ENCODE measurements at regions of chr12 and their contacts with region 1.

Region 1: DNA sequence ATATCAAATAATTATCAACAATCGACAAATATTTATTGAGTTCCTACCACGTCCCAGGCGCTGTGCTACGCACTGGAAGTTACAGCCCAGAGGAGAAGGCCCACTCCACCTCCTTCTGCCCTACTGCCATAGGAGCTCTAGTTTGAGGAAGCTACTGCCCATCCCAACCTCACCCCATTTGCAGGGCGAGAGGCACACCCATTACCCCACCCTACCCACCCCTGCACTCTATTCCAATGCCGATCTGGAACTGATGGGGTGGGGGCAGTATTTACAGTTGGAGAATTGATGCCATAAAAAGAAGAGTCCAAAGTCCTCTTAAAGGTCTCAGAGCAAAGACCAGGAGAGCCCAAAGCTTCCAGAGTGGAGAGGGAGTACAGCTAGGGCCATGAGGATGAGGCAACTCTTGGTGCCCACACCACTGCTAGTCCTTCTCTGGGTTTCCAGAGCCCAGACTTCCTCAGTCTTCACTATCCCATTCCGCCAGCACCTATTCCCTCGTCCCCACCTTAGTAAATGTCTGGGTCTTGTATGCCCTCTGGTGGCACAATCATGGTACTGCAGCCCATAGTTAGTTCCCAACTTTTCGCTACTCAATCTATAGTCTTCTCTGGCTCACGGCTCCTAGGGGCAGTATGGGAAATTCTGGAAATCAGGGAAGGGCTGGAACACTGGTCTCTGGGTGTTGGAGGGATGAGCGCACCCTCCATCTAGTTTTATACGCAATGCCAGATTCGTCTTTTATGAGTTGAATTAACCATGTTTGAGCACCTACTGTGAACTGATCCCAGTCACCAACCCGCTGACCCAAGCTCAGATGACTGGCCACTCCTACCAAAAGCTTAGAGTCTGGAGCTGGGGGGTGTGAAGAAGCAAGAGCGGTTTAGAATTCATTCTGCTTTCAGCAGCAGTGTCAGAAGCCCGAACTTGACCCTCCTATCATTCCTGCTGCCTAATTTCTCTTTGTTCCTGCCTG is 6.9 kb upstream of the ADCY6 start:
- DNase-seq: peak; percentile 60
- H3K4me3 Mint-ChIP-seq: no peak overlapping the region
- H3K27ac Mint-ChIP-seq: no peak overlapping the region
- H3K4me1 Mint-ChIP-seq: peaks cover 5% of the 10 kb centered on the region
- H3K27me3 Mint-ChIP-seq: peaks cover 9% of the 10 kb centered on the region

Region 2: DNA sequence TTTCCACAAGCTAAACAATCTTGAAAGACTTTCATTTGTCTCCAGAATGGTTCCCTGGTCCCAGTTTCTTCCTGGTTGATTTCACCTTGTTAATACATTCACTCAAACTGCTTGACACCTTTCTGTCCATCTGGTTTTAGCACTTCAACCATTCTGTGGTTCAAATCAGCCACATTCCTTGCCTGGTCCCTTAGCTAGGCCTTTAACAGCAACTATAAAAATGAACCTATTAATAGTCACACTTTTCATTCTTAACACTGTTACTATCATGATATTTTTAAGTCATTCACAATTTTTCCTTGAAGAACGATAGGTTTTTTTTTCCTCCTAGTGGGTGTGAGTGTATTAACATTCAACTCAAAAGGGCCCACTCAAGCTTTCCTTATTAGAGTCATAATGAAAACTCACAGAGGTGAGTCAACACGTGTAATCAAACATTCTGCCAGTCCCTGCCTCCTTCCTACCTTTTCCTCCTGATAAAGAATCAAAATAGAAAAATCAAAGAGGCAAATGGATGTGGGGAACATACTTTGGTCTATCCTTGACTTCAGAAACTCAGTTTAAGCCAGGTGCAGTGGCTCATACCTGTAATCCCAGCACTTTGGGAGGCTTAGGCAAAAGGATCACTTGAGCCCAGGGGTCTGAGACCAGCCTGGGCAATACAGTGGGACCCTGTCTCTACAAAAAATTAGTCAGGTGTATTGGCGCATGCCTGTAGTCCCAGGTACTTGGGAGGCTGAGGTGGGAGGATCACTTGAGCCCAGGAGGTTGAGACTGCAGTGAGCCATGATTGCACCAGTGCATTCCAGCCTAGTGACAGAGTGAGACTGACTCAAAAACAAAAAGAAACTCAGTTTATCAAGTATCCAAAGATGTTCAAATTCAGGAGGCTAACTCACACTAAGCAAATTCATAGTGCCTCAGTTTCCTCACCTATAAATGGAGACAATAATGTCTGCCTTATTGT is 44.7 kb before region 1 on chr12:
- CTCF ChIA-PET with region 1: interaction called, 41 read pairs
- POLR2A ChIA-PET with region 1: interaction called, 10 read pairs
- DNase-seq: no peak
- H3K4me3 Mint-ChIP-seq: no peak overlapping the region
- H3K27ac Mint-ChIP-seq: no peak overlapping the region
- H3K4me1 Mint-ChIP-seq: no peaks in the 10 kb centered on the region
- H3K27me3 Mint-ChIP-seq: peaks cover 6% of the 10 kb centered on the region

Region 3: DNA sequence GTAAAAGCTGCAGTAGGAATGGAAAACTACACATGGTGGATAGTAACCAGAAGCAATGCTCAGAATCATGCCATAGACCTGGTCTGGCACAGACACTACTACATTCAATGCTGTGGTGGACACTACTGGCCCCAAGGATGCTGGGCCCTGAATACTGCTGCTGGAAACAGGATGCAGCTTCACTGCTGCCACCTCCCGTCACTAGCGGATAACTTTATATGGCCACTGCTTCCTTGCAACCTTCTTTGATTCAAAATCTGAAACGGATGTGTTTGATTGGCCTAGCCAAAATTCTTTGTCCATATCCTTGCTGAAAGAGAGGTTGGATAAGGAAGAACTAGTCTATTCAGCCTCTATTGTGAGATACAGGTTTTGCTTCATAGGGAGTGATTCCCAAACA is 37.5 kb before region 1 on chr12:
- CTCF ChIA-PET with region 1: interaction called, 41 read pairs
- POLR2A ChIA-PET with region 1: interaction called, 10 read pairs
- DNase-seq: no peak
- H3K4me3 Mint-ChIP-seq: no peak overlapping the region
- H3K27ac Mint-ChIP-seq: no peak overlapping the region
- H3K4me1 Mint-ChIP-seq: peaks cover 2% of the 10 kb centered on the region
- H3K27me3 Mint-ChIP-seq: peaks cover 4% of the 10 kb centered on the region

Region 4: GRCh38 chr12:48814262-48815125 is 18.7 kb after region 1 on chr12:
- CTCF ChIA-PET with region 1: interaction called, 28 read pairs
- POLR2A ChIA-PET with region 1: no interaction called
- DNase-seq: peak; percentile 70
- H3K4me3 Mint-ChIP-seq: peak overlapping the region; percentile 84
- H3K27ac Mint-ChIP-seq: peak overlapping the region; percentile 85
- H3K4me1 Mint-ChIP-seq: peaks cover 37% of the 10 kb centered on the region
- H3K27me3 Mint-ChIP-seq: peaks cover 17% of the 10 kb centered on the region

Region 5: DNA sequence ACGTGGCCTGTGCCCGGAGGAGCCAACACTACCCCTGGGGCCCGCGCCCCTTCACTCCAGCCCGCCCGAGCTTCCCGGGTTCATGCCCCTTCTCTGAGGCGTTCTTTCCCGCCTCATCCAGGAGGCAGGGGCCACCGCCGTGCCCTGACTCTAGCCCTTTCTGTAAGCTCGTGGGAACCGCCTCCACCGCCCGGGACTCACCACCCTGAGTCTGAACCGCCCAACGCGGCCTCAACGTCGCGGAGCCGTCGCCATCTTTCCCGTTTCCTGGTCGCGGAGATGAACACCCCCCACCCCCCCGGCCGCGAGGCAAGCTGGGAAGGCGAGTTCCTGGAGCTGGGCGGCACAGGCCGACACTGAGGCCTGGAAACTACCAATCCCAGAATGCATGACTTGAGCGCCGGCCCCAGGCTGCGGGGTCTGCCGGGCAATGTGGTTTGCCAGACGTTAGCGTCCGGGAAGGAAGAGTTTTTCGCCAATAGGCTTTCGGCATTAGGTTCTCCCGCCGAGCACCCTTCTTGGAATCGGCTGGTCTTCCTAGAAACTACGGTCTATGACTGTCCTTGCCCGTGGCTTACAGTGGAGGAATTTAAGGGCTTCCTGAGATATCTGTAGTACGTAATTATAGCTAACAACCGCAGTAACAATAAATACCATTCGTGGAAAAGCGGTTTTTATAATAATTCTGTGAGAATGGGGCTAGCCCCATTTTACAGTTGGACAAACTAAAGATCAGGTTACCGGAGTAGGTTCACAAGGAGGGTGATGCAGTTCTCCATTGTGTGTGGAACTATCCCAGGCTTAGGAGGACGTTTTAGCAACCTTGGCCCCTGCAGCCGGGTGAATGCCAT is 56.3 kb after region 1 on chr12 and contains the start of gene DDX23:
- CTCF ChIA-PET with region 1: no interaction called
- POLR2A ChIA-PET with region 1: no interaction called
- DNase-seq: peak; percentile 95
- H3K4me3 Mint-ChIP-seq: peak within 1 kb of the TSS; percentile 97
- H3K27ac Mint-ChIP-seq: peak within 1 kb of the TSS; percentile 95
- H3K4me1 Mint-ChIP-seq: peaks cover 36% of the 10 kb centered on the region
- H3K27me3 Mint-ChIP-seq: no peaks in the 10 kb centered on the region
- total RNA-seq, gene DDX23: 143 to 144 TPM

Region 6: DNA sequence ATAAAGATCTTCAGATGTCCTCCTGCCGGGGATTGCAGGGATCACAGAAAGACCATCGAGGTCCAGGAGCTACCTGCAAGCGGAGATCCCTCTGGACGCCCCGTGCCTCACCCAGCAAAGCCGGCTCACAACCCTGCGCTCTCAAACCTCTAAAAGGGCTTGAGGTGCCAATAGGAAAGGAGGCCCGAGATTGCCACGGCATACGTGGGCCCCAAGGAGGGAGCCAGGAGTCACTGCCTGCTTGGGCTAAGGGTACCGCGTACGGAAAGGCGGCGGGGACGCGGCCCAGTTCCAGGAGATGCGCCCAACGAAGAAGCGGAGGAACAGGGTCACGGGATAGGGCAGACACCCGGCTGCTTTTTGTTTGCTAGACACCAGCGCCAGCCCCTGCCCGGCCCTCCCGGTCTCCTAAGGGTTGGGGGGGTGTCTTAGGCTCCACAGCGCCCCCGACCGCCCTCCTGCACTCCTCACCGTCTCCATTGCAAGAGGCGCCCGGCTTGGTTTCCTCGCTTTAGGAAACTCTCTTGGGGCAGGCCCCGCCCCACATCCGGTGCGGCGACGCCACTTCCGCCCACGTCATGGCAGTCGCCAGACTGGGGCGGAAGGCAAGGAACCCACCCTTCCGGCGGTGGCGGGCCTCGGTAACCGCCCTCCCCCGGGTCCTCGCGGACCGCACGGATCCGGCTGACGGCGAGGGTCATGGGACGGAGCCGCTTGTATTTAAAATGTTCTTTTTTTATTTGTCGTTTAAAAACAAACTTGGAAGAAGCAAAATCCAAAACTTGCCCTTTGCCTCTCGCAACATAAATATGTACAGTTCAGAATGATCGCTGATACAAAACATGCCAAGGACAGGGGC is 222.7 kb after region 1 on chr12 and contains the start of gene PRKAG1:
- CTCF ChIA-PET with region 1: no interaction called
- POLR2A ChIA-PET with region 1: no interaction called
- DNase-seq: peak; percentile 97
- H3K4me3 Mint-ChIP-seq: peak within 1 kb of the TSS; percentile 95
- H3K27ac Mint-ChIP-seq: peak within 1 kb of the TSS; percentile 99
- H3K4me1 Mint-ChIP-seq: peaks cover 43% of the 10 kb centered on the region
- H3K27me3 Mint-ChIP-seq: no peaks in the 10 kb centered on the region
- total RNA-seq, gene PRKAG1: 62.5 to 65.5 TPM

Measured in activated CD4-positive, alpha-beta T cell treated with anti-CD3 and anti-CD28 coated beads, Interleukin-2, amount 10 ng/mL, durations not matched to agents 7 days and 5 days (primary cell).